Body of pancreas (tissue), 4 donors: ENCODE measurements at regions of chr14 and their contacts with region 1.

Region 1: DNA sequence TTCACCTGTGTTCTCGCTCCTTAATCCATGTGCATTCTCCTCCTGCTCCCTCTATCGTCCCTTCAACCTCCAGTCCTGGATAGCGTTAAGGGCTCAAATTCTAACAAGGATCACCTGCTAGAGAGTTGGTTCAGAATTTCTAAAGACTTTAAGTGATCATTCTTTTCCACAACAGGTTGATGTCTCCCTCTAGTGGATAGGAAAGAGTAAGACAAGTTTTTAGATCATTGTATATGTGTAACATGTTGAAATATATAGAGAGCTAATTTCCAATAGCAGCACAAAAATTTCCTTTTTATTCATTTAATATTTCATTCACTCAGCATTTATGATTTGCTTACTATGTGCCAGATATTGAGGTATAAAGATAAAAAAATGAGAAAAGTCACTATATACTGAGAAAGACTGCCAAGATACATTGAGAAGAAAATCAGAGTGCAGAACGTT is 9.3 kb upstream of the ESR2 start:
- DNase-seq: no peak
- ATAC-seq: peak; percentile 72
- H3K4me3 ChIP-seq: no peak overlapping the region
- H3K27ac ChIP-seq: no peak overlapping the region
- H3K4me1 ChIP-seq: peaks cover 9% of the 10 kb centered on the region
- H3K27me3 ChIP-seq: no peaks in the 10 kb centered on the region
- CTCF ChIP-seq: peak; percentile 69 to 84 (median 79)
- POLR2A ChIP-seq: no peak

Region 2: GRCh38 chr14:63795532-63795931 is 508.0 kb before region 1 on chr14:
- intact Hi-C with region 1: loop called (anchors 5 kb)
- DNase-seq: no peak
- ATAC-seq: no peak
- H3K4me3 ChIP-seq: no peak overlapping the region
- H3K27ac ChIP-seq: no peak overlapping the region
- H3K4me1 ChIP-seq: peaks cover 8% of the 10 kb centered on the region
- H3K27me3 ChIP-seq: no peaks in the 10 kb centered on the region
- CTCF ChIP-seq: no peak
- POLR2A ChIP-seq: no peak